ENCODE measurements at regions of chr10 and their contacts with region 1.

Region 1: DNA sequence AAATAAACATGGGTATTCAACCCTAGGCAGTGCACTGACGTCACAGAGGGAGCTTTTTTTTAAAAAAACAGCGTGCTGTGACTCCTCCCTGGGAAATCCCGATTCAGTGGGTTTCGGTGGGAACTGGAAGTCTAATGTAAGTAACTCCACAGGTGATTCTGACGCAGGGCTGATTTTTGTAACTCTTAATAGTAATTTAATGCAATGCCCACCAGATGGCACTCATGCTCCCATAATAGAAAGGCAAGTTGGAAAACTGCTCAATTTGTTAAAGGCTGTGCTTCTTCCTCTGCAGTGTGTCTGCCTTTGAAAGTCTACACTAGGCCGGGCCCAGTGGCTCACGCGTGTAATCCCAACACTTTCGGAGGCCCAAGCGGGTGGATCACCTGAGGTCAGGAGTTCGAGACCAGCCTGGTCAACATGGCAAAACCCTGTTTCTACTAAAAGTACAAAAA is 10.9 kb upstream of the RSU1 start:
- DNase-seq: peak; percentile 48
- H3K4me3 Mint-ChIP-seq: no peak overlapping the region
- H3K27ac Mint-ChIP-seq: no peak overlapping the region
- H3K4me1 Mint-ChIP-seq: peaks cover 7% of the 10 kb centered on the region
- H3K27me3 Mint-ChIP-seq: peaks cover 6% of the 10 kb centered on the region

Region 2: DNA sequence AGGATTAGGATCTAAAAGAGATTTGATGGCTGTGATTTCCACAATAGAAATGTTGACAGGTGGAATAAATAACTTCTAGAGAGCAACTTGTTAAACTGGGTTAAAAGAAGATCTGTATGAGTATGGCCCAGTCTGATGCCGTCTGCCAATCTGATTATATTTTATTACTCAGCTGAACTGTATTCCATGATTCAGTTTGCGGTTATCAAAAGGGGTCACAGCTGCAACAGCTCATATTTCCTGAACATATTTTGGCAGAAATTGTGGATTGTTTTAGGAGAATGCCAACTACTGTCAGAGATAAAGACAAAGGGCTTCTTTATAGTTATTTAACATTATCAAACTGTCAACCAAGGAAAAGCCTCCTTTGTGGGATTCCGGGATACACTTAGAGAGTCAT is 723.1 kb before region 1 on chr10:
- intact Hi-C with region 1: no loop called
- DNase-seq: no peak
- H3K4me3 Mint-ChIP-seq: no peak overlapping the region
- H3K27ac Mint-ChIP-seq: no peak overlapping the region
- H3K4me1 Mint-ChIP-seq: no peaks in the 10 kb centered on the region
- H3K27me3 Mint-ChIP-seq: no peaks in the 10 kb centered on the region

Region 3: DNA sequence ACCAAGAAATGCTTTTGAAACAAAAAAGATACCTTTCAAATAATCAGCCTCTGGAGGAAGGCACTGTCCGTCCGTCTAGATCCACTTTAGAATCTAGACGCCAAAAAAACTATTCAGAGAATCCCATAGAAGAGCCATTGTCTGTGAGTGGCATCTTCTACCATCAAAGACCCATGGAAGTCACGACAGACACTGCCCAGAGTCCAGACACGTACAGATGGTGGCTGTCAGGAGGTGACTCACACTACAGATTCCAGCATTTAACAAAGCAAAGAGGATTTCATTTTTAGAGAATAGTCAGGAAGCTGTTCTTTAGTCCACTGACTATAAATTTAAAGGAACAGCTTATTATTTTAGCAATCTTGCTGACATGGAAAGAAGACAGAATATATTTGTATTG is 318.1 kb before region 1 on chr10:
- intact Hi-C with region 1: no loop called
- DNase-seq: no peak
- H3K4me3 Mint-ChIP-seq: no peak overlapping the region
- H3K27ac Mint-ChIP-seq: no peak overlapping the region
- H3K4me1 Mint-ChIP-seq: no peaks in the 10 kb centered on the region
- H3K27me3 Mint-ChIP-seq: no peaks in the 10 kb centered on the region

Region 4: GRCh38 chr10:17249820-17250219 is 421.7 kb after region 1 on chr10:
- intact Hi-C with region 1: loop called (anchors 2 kb)
- DNase-seq: no peak
- H3K4me3 Mint-ChIP-seq: no peak overlapping the region
- H3K27ac Mint-ChIP-seq: no peak overlapping the region
- H3K4me1 Mint-ChIP-seq: no peaks in the 10 kb centered on the region
- H3K27me3 Mint-ChIP-seq: peaks cover 6% of the 10 kb centered on the region

Region 5: DNA sequence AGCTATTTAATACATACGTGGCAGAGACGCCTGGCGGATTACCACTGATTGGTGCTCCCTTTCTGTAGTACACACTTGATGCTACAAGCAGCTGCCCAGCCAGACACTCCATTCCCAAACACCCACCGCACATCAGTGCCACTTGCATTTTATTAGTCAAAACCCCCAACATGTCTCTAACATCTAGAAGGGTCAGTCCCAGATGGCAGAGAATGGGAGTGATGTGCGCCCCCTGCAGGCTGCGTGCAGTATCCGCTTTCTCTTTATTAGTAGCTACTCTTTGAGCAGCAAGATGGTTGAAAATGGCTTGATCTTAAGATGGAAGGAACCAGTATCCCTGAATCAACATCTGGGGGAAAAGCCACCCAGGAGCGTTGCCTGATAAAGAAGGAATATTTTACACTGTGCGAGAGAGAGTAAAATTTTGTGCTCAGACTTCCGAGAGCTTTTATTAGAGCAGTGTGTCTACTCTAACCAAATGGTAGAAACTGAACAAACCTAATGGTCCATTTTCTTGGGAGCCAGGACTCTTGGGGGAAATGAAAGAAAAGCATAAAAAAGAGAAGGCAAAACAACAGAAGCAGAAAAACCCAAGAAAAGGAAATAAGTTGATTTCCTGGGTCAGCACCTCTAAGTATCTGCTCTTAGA is 547.9 kb after region 1 on chr10:
- intact Hi-C with region 1: loop called (anchors 5 kb)
- DNase-seq: no peak
- H3K4me3 Mint-ChIP-seq: no peak overlapping the region
- H3K27ac Mint-ChIP-seq: no peak overlapping the region
- H3K4me1 Mint-ChIP-seq: no peaks in the 10 kb centered on the region
- H3K27me3 Mint-ChIP-seq: peaks cover 5% of the 10 kb centered on the region

Measured in activated T-helper 1 cell treated with anti-CD3 and anti-CD28 coated beads, Interleukin-12 subunit alpha, Interleukin-12 subunit beta, Interleukin-2, Interleukin-4 antibody, amounts not matched to agents 30 ng/mL and 10 ng/mL and 1 ng/mL, durations not matched to agents 14 hours and 24 hours and 36 hours (primary cell).